Spleen (tissue), 13 donors: ENCODE measurements at regions of chr20 and their contacts with region 1.

Region 1: DNA sequence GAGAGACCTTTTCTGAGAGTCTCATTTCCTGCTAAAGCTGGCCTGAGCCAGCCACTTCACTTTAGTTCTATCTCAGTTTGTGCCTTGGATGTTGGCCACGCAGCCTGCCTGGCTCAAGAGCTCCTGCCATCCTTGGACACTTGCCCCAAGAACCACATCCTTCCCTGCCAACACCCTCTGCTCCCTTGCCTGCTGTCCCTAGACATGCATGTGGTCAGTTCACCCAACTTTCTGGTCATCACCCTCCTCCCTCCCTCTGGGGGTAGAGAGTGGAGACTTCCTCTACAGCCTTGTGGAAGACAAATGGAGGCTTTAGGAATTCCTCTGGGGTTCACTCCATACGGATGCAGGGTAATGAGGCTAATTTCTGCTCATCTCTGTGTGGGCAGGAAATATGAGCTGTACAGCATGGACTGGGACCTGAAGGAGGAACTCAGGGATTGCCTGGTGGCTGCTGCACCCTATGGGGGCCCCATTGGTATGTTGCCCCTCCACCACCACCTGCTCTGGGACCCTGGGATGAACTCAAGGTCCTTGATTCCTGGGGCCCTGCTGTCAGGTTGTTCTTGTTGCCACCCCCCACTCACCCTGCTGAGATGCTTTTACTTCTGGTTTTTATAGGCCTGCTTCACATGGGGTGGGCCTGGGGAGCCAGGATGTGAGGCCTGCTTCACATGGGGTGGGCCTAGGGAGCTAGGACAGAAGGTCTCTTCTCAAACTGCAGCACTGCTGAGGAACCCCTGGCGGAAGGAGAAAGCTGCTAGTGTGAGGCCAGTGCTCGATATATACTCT is 13.8 kb upstream of the PTPRA start:
- DNase-seq: no peak
- H3K4me3 ChIP-seq: no peak overlapping the region
- H3K27ac ChIP-seq: no peak overlapping the region
- H3K4me1 ChIP-seq: peaks cover 0 to under 1% (median 0%) of the 10 kb centered on the region in 6 donors
- H3K27me3 ChIP-seq: no peaks in the 10 kb centered on the region
- CTCF ChIP-seq: no peak
- POLR2A ChIP-seq: no peak

Region 2: GRCh38 chr20:2688041-2688591 is 171.4 kb before region 1 on chr20:
- intact Hi-C with region 1: loop called (anchors 10 kb)
- DNase-seq: peak; percentile 87
- H3K4me3 ChIP-seq: no peak overlapping the region
- H3K27ac ChIP-seq: no peak overlapping the region
- H3K4me1 ChIP-seq: peaks cover 5 to 28% (median 20%) of the 10 kb centered on the region in 6 donors
- H3K27me3 ChIP-seq: peaks cover 0 to 59% (median 10%) of the 10 kb centered on the region in 7 donors
- CTCF ChIP-seq: peak; percentile 54 to 85 (median 65)
- POLR2A ChIP-seq: no peak